ENCODE measurements at regions of chr12 and their contacts with region 1.

Region 1: DNA sequence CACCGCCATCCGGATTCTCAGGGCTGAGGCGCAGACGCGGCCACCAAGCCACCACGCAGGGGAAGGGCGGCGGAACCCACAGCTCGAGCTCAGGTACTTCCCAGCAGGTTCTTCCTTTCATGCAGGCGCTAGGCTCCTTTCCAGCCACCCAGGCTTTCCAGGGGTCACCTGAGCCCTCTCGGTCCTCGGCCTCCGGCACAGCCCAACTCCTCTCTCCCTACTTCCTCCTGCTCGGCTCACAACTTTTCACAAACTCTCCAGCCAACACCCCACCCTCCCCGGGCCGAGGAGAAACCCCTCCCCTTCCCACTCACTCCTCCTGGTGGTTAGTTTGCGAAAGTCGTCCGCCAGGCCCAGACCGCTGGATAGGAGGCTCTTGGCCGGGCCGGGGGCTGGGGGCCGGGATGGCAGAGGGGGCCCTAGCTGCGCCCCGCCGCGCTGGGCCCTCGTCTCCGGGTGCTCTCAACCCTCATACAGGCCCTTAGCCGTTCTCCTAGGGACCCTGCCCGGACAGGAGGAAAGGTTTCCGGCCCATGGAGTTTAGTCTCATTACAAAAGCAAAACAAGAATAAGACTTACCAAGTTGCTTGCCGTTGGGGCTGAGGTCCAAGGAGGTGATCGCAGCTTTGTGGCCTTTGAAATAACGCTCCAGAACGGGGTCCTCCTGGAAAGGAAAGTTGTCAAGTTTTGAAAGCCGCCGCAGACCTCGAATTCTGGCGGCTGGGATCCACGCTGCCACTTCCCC is at the start of gene GALNT4:
- DNase-seq: peak; percentile 79 to 87 (median 84)
- H3K4me3 ChIP-seq: peak within 1 kb of the TSS; percentile 53
- H3K27ac ChIP-seq: peak within 1 kb of the TSS; percentile 83 to 84
- H3K4me1 ChIP-seq: peaks cover 10% of the 10 kb centered on the region
- H3K27me3 ChIP-seq: no peaks in the 10 kb centered on the region
- CTCF ChIP-seq: peak; percentile 52 to 75 (median 65)
- EP300 ChIP-seq: no peak
- POLR2A ChIP-seq: peak; percentile 46
- total RNA-seq, gene GALNT4: 2.7 to 12.5 (median 4.9) TPM

Region 2: DNA sequence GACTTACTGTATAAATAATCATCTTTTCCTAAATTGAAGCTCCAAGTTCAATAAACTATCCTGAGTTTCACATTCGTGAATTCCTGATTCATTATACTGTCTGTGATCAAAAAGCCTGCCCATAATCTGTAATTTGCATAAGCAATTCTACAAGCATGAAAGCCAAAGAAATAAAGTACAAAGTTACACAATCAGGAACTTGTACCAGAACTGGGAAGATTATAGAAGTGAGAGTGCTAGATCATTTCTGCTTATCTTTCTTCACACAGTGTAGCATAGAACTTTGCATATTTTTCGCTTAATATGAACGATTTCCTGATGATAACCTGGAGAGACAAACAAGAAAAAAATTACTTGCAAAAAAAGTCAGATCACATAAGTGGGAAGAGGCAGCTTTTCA is 1803.7 kb before region 1 on chr12:
- intact Hi-C with region 1: no loop called
- DNase-seq: no peak
- H3K4me3 ChIP-seq: no peak overlapping the region
- H3K27ac ChIP-seq: no peak overlapping the region
- H3K4me1 ChIP-seq: no peaks in the 10 kb centered on the region
- H3K27me3 ChIP-seq: no peaks in the 10 kb centered on the region
- CTCF ChIP-seq: no peak
- EP300 ChIP-seq: no peak
- POLR2A ChIP-seq: no peak

Region 3: GRCh38 chr12:89019408-89020120 is 505.1 kb before region 1 on chr12:
- intact Hi-C with region 1: loop called in 2 of 4 experiments (anchors 5 to 10 kb)
- DNase-seq: peak; percentile 52 to 82 (median 62)
- H3K4me3 ChIP-seq: peak overlapping the region; percentile 8
- H3K27ac ChIP-seq: no peak overlapping the region
- H3K4me1 ChIP-seq: peaks cover 3% of the 10 kb centered on the region
- H3K27me3 ChIP-seq: no peaks in the 10 kb centered on the region
- CTCF ChIP-seq: peak; percentile 39 to 63 (median 56)
- EP300 ChIP-seq: no peak
- POLR2A ChIP-seq: no peak

Region 4: GRCh38 chr12:89470741-89471509 is 53.8 kb before region 1 on chr12:
- intact Hi-C with region 1: loop called in 3 of 4 experiments (anchors 10 kb)
- DNase-seq: no peak
- H3K4me3 ChIP-seq: no peak overlapping the region
- H3K27ac ChIP-seq: no peak overlapping the region
- H3K4me1 ChIP-seq: peaks cover 4% of the 10 kb centered on the region
- H3K27me3 ChIP-seq: no peaks in the 10 kb centered on the region
- CTCF ChIP-seq: no peak
- EP300 ChIP-seq: no peak
- POLR2A ChIP-seq: no peak

Region 5: GRCh38 chr12:89504560-89505346 is 20.0 kb before region 1 on chr12:
- intact Hi-C with region 1: loop called in 1 of 4 experiments (anchors 2 kb)
- DNase-seq: no peak
- H3K4me3 ChIP-seq: no peak overlapping the region
- H3K27ac ChIP-seq: no peak overlapping the region
- H3K4me1 ChIP-seq: no peaks in the 10 kb centered on the region
- H3K27me3 ChIP-seq: no peaks in the 10 kb centered on the region
- CTCF ChIP-seq: no peak
- EP300 ChIP-seq: no peak
- POLR2A ChIP-seq: no peak